ENCODE measurements at regions of chr5 and their contacts with region 1.

Region 1: GRCh38 chr5:171913987-171914273 is 92.5 kb downstream of the FBXW11 start:
- DNase-seq: no peak
- H3K4me3 ChIP-seq: no peak overlapping the region
- H3K27ac ChIP-seq: no peak overlapping the region
- H3K4me1 ChIP-seq: peaks cover 0 to 10% (median 8%) of the 10 kb centered on the region in 4 experiments; a peak in 5 of 7 replicates
- H3K27me3 ChIP-seq: no peaks in the 10 kb centered on the region
- CTCF ChIP-seq: no peak
- EP300 ChIP-seq: no peak
- POLR2A ChIP-seq: no peak
- RAD21 ChIP-seq: no peak

Region 2: DNA sequence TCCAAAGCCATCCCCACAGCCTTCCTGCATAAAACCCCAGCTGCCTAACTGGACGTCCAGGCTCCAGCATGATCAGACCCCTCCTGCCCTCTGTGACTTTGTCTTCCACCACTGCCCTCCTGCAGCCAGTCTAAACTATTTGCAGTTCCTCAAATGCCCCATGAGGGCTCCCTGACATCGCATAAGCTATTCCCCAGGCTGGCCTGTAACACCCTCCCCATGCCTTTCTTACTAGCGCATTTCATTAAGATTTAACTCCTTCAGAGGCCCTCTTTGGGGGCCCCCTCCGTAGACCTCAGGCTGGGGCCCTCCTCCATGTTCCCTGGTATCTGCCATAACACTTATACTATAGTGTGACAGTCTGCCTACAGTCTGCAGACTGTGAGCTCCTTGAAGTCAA is 143.8 kb before region 1 on chr5:
- CTCF ChIA-PET with region 1: no interaction called
- POLR2A ChIA-PET with region 1: no interaction called
- DNase-seq: peak in 1 of 2 experiments; percentile 48
- H3K4me3 ChIP-seq: no peak overlapping the region
- H3K27ac ChIP-seq: no peak overlapping the region
- H3K4me1 ChIP-seq: peaks cover 0 to 4% (median 0%) of the 10 kb centered on the region in 4 experiments; a peak in 2 of 7 replicates
- H3K27me3 ChIP-seq: no peaks in the 10 kb centered on the region
- CTCF ChIP-seq: peak; percentile 26 to 50 (median 49)
- EP300 ChIP-seq: no peak
- POLR2A ChIP-seq: no peak
- RAD21 ChIP-seq: peak; percentile 63 to 73

Region 3: GRCh38 chr5:171953860-171954701 is 40.2 kb after region 1 on chr5:
- CTCF ChIA-PET with region 1: interaction called, 12 read pairs
- POLR2A ChIA-PET with region 1: no interaction called
- DNase-seq: no peak
- H3K4me3 ChIP-seq: no peak overlapping the region
- H3K27ac ChIP-seq: no peak overlapping the region
- H3K4me1 ChIP-seq: peaks cover 8 to 17% (median 15%) of the 10 kb centered on the region in 4 experiments; a peak in 6 of 7 replicates
- H3K27me3 ChIP-seq: no peaks in the 10 kb centered on the region
- CTCF ChIP-seq: no peak
- EP300 ChIP-seq: no peak
- POLR2A ChIP-seq: no peak
- RAD21 ChIP-seq: no peak

Region 4: GRCh38 chr5:171968531-171968930 is 54.6 kb after region 1 on chr5:
- CTCF ChIA-PET with region 1: interaction called, 13 read pairs
- POLR2A ChIA-PET with region 1: no interaction called
- DNase-seq: no peak
- H3K4me3 ChIP-seq: no peak overlapping the region
- H3K27ac ChIP-seq: no peak overlapping the region
- H3K4me1 ChIP-seq: peaks cover 8 to 21% (median 10%) of the 10 kb centered on the region in 4 experiments; a peak in 4 of 7 replicates
- H3K27me3 ChIP-seq: no peaks in the 10 kb centered on the region
- CTCF ChIP-seq: no peak
- EP300 ChIP-seq: no peak
- POLR2A ChIP-seq: no peak
- RAD21 ChIP-seq: no peak

Region 5: GRCh38 chr5:172006321-172007174 is 92.6 kb after region 1 on chr5 and contains the start of gene FBXW11:
- CTCF ChIA-PET with region 1: interaction called, 33 read pairs
- POLR2A ChIA-PET with region 1: interaction called, 24 read pairs
- DNase-seq: peak; percentile 89 to 91
- H3K4me3 ChIP-seq: peak within 1 kb of the TSS; percentile 82 to 99 (median 96)
- H3K27ac ChIP-seq: peak within 1 kb of the TSS; percentile 98
- H3K4me1 ChIP-seq: peaks cover 13 to 34% (median 19%) of the 10 kb centered on the region in 4 experiments
- H3K27me3 ChIP-seq: no peaks in the 10 kb centered on the region
- CTCF ChIP-seq: no peak; a peak in 1 of 4 replicates
- EP300 ChIP-seq: no peak
- POLR2A ChIP-seq: peak; percentile 63 to 72
- RAD21 ChIP-seq: no peak
- total RNA-seq, gene FBXW11: 75.6 and 77.2 TPM in 2 replicates

Region 6: GRCh38 chr5:172035039-172035438 is 121.1 kb after region 1 on chr5:
- CTCF ChIA-PET with region 1: interaction called, 83 read pairs
- POLR2A ChIA-PET with region 1: no interaction called
- DNase-seq: no peak
- H3K4me3 ChIP-seq: no peak overlapping the region
- H3K27ac ChIP-seq: no peak overlapping the region
- H3K4me1 ChIP-seq: no peaks in the 10 kb centered on the region; a peak in 1 of 7 replicates
- H3K27me3 ChIP-seq: no peaks in the 10 kb centered on the region
- CTCF ChIP-seq: no peak
- EP300 ChIP-seq: no peak
- POLR2A ChIP-seq: no peak
- RAD21 ChIP-seq: no peak

Region 7: GRCh38 chr5:172052450-172053236 is 138.7 kb after region 1 on chr5:
- CTCF ChIA-PET with region 1: interaction called, 48 read pairs
- POLR2A ChIA-PET with region 1: no interaction called
- DNase-seq: no peak
- H3K4me3 ChIP-seq: no peak overlapping the region
- H3K27ac ChIP-seq: no peak overlapping the region
- H3K4me1 ChIP-seq: peaks cover 0 to 7% (median 0%) of the 10 kb centered on the region in 4 experiments; a peak in 2 of 7 replicates
- H3K27me3 ChIP-seq: no peaks in the 10 kb centered on the region
- CTCF ChIP-seq: peak in 1 of 3 experiments; percentile 19; a peak in 1 of 4 replicates
- EP300 ChIP-seq: no peak
- POLR2A ChIP-seq: no peak
- RAD21 ChIP-seq: peak in 1 of 2 experiments; percentile 9; a peak in 1 of 4 replicates